Tibial artery (tissue), 4 donors: ENCODE measurements at regions of chr7 and their contacts with region 1.

Region 1: GRCh38 chr7:127588019-127588696 is at the start of gene ARF5:
- DNase-seq: peak; percentile 85 to 94
- H3K4me3 ChIP-seq: peak within 1 kb of the TSS; percentile 97 to 98
- H3K27ac ChIP-seq: peak within 1 kb of the TSS; percentile 90 to 93
- H3K4me1 ChIP-seq: peaks cover 0 to 47% (median 37%) of the 10 kb centered on the region in 4 donors
- H3K27me3 ChIP-seq: no peaks in the 10 kb centered on the region
- CTCF ChIP-seq: no peak

Region 2: DNA sequence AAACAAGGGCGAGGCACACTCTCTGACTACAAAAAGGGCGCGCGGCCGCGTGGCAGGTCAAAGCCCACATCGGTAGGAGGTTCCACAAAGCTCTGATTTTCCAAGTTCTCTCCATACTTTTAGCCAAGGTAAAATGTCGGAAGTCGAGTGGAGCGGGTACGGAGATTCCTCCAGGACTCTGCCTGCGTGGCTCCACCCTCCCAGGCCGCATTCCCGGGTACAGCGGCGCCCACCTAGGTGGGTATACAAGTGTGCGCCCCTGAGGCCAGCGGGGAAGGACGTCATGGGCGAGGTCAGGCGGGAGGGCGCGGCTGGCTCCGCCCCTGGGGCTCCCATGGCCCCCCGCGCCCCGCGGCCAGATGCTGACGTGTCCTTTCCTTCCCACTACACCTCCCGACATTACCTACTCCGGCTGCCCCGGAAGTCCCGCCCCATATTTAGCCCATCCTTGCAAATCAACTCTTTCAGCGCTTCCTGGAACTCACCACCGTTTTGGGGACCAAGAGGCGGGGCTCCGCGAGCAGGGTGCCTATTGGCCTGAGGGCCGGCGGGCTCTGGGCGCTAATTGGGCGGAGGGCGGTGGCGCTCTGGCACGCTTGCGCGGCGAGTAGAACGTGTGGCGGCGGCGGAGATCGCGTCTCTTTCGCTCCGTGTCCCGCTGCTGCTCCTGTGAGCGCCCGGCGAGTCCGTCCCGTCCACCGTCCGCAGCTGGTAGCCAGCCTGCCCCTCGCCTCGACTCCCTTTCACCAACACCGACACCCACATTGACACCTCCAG is 63.6 kb after region 1 on chr7 and contains the start of gene SND1:
- intact Hi-C with region 1: loop called (anchors 1 kb)
- DNase-seq: peak; percentile 99 to 100
- H3K4me3 ChIP-seq: peak within 1 kb of the TSS; percentile 91 to 96
- H3K27ac ChIP-seq: peak within 1 kb of the TSS; percentile 85 to 98
- H3K4me1 ChIP-seq: peaks cover 7 to 37% (median 24%) of the 10 kb centered on the region in 4 donors
- H3K27me3 ChIP-seq: no peaks in the 10 kb centered on the region
- CTCF ChIP-seq: no peak